Panc1 (cell line): ENCODE measurements at regions of chr13 and their contacts with region 1.

Region 1: GRCh38 chr13:70623239-70623638 is 515.0 kb upstream of the KLHL1 start:
- DNase-seq: no peak
- ATAC-seq: no peak
- H3K4me3 ChIP-seq: no peak overlapping the region
- H3K27ac ChIP-seq: no peak overlapping the region
- H3K4me1 ChIP-seq: no peaks in the 10 kb centered on the region
- H3K27me3 ChIP-seq: no peaks in the 10 kb centered on the region
- CTCF ChIP-seq: peak; percentile 41; the same call in 1 of the 2 replicates

Region 2: GRCh38 chr13:70407486-70407885 is 215.8 kb before region 1 on chr13:
- CTCF ChIA-PET with region 1: no interaction called
- POLR2A ChIA-PET with region 1: no interaction called
- in situ Hi-C with region 1: no loop called
- intact Hi-C with region 1: no loop called
- DNase-seq: no peak
- ATAC-seq: no peak
- H3K4me3 ChIP-seq: no peak overlapping the region
- H3K27ac ChIP-seq: no peak overlapping the region
- H3K4me1 ChIP-seq: no peaks in the 10 kb centered on the region
- H3K27me3 ChIP-seq: no peaks in the 10 kb centered on the region
- CTCF ChIP-seq: no peak

Region 3: DNA sequence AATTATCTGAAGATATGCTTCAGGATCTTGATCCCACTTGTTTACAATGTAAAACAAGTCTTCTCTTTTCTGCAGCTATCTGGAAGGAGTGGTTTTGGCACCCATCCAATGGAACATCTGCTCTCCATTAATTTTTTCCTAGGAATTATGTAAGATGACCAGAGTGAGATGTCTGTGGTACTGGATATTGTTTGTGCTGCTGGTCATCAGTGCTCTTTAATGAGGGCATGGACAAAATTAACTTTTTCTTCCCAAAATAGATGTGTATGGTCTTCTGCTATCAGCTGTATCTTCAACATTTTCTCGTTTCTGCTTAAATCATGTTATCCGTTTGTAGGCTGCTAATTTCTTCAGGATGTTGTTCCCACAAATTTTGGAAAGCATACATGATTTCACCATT is 99.6 kb before region 1 on chr13:
- CTCF ChIA-PET with region 1: no interaction called
- POLR2A ChIA-PET with region 1: no interaction called
- in situ Hi-C with region 1: no loop called
- intact Hi-C with region 1: no loop called
- DNase-seq: no peak
- ATAC-seq: no peak
- H3K4me3 ChIP-seq: no peak overlapping the region
- H3K27ac ChIP-seq: no peak overlapping the region
- H3K4me1 ChIP-seq: no peaks in the 10 kb centered on the region
- H3K27me3 ChIP-seq: no peaks in the 10 kb centered on the region
- CTCF ChIP-seq: no peak

Region 4: GRCh38 chr13:71219698-71220415 is 596.6 kb after region 1 on chr13:
- CTCF ChIA-PET with region 1: no interaction called
- POLR2A ChIA-PET with region 1: no interaction called
- in situ Hi-C with region 1: no loop called
- intact Hi-C with region 1: loop called (anchors 10 kb)
- DNase-seq: no peak
- ATAC-seq: no peak
- H3K4me3 ChIP-seq: no peak overlapping the region
- H3K27ac ChIP-seq: no peak overlapping the region
- H3K4me1 ChIP-seq: no peaks in the 10 kb centered on the region
- H3K27me3 ChIP-seq: no peaks in the 10 kb centered on the region
- CTCF ChIP-seq: no peak